ENCODE measurements at regions of chr20 and their contacts with region 1.

Region 1: GRCh38 chr20:34312544-34313217 is 9.5 kb upstream of the AHCY start:
- DNase-seq: peak; percentile 89

Region 2: GRCh38 chr20:34190679-34191090 is 122.0 kb before region 1 on chr20:
- CTCF ChIA-PET with region 1: interaction called, 12 read pairs
- POLR2A ChIA-PET with region 1: no interaction called
- DNase-seq: peak; percentile 84

Region 3: DNA sequence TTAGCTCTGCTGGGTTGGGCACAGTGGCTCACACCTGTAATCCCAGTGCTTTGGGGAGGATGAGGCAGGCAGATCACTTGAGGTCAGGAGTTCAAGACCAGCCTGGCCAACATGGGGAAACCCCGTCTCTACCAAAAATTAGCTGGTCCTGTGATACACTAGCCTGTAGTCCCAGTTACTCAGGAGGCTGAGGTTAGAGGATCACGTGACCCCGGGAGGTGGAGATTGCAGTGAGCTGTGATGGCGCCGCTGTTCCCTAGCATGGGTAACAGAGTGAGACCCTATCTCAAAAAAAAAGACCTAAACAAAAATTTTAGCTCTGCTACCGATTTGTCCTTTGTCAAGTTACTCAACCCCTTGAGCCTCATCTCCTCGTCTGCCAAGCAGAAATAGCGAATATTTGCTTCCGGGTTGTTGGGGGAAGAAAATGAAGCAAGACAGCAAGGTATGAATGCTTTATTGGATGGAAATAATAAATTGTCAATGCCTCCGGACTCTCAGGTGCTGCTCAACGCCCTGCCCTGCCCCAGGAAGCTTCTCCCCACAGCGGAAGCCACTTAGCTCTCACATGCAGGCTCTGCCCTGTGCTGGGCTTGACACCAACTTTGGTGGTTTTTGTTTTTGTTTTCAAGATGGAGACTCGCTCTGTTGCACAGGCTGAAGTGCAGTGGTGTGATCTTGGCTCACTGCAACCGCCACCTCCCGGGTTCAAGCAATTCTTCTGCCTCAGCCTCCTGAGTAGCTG is 25.5 kb after region 1 on chr20:
- CTCF ChIA-PET with region 1: interaction called, 12 read pairs
- POLR2A ChIA-PET with region 1: no interaction called
- DNase-seq: no peak

Region 4: GRCh38 chr20:34415079-34415478 is 102.4 kb after region 1 on chr20:
- CTCF ChIA-PET with region 1: interaction called, 10 read pairs
- POLR2A ChIA-PET with region 1: no interaction called
- DNase-seq: no peak

Region 5: GRCh38 chr20:34473262-34473883 is 160.7 kb after region 1 on chr20:
- CTCF ChIA-PET with region 1: interaction called, 27 read pairs
- POLR2A ChIA-PET with region 1: no interaction called
- DNase-seq: peak; percentile 41

Region 6: DNA sequence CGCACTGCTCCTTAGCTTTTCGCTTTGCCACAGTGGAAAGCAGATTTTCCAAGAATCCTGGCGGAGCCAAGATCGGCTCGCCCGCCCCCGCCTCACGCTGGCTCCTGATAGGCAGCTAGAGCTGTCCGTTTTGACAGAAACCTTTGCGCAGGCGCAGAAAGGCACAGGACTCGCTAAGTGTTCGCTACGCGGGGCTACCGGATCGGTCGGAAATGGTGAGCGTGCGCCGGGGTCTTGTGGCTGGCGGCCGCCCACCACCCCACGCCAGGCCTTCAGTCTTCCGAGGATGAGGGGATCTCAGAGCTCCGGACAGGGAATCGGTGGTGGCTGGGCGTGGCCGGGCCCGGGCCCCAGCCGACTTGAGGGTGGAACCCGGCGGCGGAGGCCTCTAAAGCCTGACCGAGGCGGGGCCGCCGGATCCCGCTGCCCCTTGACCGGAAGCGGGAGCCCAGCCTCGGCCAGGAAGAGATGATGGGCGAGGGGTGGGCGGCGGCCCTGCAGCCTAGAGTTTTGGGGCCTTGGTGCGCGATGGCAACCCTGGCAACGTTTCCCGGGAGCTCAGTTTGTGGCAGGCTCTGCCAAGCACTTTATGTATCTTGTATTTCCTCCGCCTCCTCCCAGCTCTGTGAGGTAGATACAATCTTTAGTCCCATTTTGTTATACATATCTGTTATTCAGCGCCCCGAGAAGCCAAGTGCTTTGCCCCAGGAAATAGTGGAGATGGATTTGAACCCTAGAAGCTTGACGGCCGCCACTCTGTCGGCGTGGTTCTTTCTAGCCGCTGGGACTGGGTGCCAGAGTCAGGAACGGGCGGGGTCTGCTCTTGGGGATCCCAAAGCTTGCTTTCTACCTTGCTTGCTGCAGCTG is 203.8 kb after region 1 on chr20 and contains the start of gene DYNLRB1:
- CTCF ChIA-PET with region 1: interaction called, 20 read pairs
- POLR2A ChIA-PET with region 1: interaction called, 10 read pairs
- DNase-seq: peak; percentile 93

Region 7: GRCh38 chr20:34522969-34523871 is 210.5 kb after region 1 on chr20:
- CTCF ChIA-PET with region 1: interaction called, 20 read pairs
- POLR2A ChIA-PET with region 1: interaction called, 3 read pairs
- DNase-seq: peak; percentile 68

Measured in HEK293T (cell line).